ENCODE measurements at regions of chr5 and their contacts with region 1.

Region 1: DNA sequence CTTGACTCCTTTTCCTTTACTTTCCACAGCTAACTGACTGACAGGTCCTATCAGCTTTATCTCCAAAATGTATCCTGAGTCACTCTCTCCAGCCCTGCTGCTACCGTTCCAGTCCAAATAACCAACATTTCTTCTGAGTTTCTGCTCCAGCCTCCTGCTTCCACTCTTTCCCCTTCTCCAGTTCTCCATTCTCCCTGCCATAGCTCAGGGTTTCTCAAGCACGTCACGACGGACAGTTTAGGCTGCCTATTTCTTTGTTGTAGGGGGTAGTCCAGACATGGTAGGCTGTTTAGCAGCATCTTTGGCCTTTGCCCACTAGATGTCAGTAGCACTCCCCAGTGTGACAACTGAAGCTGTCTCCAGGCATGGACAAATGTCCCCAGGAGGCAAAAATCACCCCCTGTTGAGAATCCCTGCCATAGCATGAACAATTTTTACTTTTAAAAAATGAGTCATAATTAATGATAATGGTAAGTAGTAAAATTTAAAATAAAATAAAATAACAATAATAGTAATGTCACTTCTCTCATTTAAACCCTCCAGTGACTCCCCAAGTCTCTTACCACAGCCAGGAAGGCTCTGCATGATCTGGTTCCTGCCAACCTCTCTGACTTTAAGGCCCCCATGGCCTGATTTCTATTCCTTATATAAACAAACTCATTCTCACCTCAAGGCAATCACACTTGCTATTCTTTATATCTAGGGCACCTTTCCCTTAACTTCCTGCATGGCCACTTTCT is 105.4 kb upstream of the FER start:
- DNase-seq: peak; percentile 92
- H3K27ac ChIP-seq: no peak overlapping the region
- CTCF ChIP-seq: peak; percentile 98

Region 2: DNA sequence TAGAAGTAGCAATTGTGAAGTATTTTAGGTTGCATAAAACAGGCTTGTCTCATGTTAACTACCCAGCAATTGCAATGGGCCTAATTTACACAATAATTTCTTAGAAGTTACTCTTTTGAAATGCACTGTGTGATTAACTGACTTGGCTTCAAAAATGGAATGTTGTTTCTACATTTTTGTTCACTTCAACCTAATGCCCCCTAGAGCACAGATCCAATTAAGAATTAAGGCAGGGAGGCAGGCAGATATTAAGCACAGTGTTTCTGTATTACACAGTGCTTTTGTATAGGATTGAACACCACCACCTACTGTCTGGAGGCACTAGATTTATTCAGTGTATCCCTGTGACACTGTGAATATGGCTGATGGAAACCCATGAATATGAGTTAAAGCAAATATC is 562.6 kb before region 1 on chr5:
- CTCF ChIA-PET with region 1: no interaction called
- POLR2A ChIA-PET with region 1: no interaction called
- DNase-seq: no peak
- H3K27ac ChIP-seq: no peak overlapping the region
- CTCF ChIP-seq: no peak

Region 3: GRCh38 chr5:108655750-108656450 is 13.6 kb after region 1 on chr5:
- CTCF ChIA-PET with region 1: interaction called, 13 read pairs
- POLR2A ChIA-PET with region 1: no interaction called
- DNase-seq: peak; percentile 91
- H3K27ac ChIP-seq: no peak overlapping the region
- CTCF ChIP-seq: no peak

Region 4: GRCh38 chr5:108661590-108662219 is 19.4 kb after region 1 on chr5:
- CTCF ChIA-PET with region 1: interaction called, 13 read pairs
- POLR2A ChIA-PET with region 1: no interaction called
- DNase-seq: peak; percentile 80
- H3K27ac ChIP-seq: no peak overlapping the region
- CTCF ChIP-seq: no peak

Region 5: DNA sequence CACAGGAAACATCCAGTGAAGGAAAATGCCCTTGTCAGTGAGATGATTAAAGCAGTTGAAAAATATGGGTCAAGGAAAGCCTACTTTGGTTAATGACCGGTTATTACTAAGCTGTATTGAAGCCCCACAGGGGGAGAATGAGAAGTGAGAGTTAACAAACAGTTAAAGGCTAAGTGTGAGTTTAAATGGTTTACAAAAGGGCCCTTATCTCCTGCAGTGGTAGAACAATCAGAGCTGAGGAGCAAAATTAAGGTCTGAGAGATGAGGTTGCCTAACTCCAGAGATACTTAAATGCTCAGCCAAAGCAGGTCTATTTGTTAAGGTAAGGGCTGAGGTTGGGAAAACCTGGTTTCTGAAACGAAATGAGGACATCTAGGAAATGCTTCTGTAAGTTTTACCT is 30.3 kb after region 1 on chr5:
- CTCF ChIA-PET with region 1: interaction called, 10 read pairs
- POLR2A ChIA-PET with region 1: no interaction called
- DNase-seq: no peak
- H3K27ac ChIP-seq: no peak overlapping the region
- CTCF ChIP-seq: no peak

Region 6: GRCh38 chr5:108727651-108728565 is 85.6 kb after region 1 on chr5:
- CTCF ChIA-PET with region 1: interaction called, 10 read pairs
- POLR2A ChIA-PET with region 1: no interaction called
- DNase-seq: peak; percentile 98
- H3K27ac ChIP-seq: peak overlapping the region; percentile 84
- CTCF ChIP-seq: no peak

Region 7: GRCh38 chr5:108788142-108788541 is 145.8 kb after region 1 on chr5:
- CTCF ChIA-PET with region 1: interaction called, 10 read pairs
- POLR2A ChIA-PET with region 1: no interaction called
- DNase-seq: no peak
- H3K27ac ChIP-seq: peak overlapping the region; percentile 21
- CTCF ChIP-seq: no peak

Region 8: GRCh38 chr5:109105631-109106267 is 463.4 kb after region 1 on chr5:
- CTCF ChIA-PET with region 1: no interaction called
- POLR2A ChIA-PET with region 1: no interaction called
- DNase-seq: peak; percentile 50
- H3K27ac ChIP-seq: no peak overlapping the region
- CTCF ChIP-seq: no peak

Measured in RWPE1 (cell line).